Gastrocnemius medialis (tissue), 4 donors: ENCODE measurements at regions of chr9 and their contacts with region 1.

Region 1: GRCh38 chr9:37251452-37251851 is 131.1 kb downstream of the ZCCHC7 start:
- DNase-seq: no peak
- ATAC-seq: no peak
- H3K4me3 ChIP-seq: no peak overlapping the region
- H3K27ac ChIP-seq: no peak overlapping the region
- H3K4me1 ChIP-seq: no peaks in the 10 kb centered on the region
- H3K27me3 ChIP-seq: no peaks in the 10 kb centered on the region
- CTCF ChIP-seq: no peak
- POLR2A ChIP-seq: no peak

Region 2: GRCh38 chr9:37197158-37198038 is 54.1 kb before region 1 on chr9:
- in situ Hi-C with region 1: loop called in 1 of 4 experiments (anchors 10 kb)
- intact Hi-C with region 1: no loop called
- DNase-seq: no peak
- ATAC-seq: peak in 1 of 2 donors; percentile 44
- H3K4me3 ChIP-seq: no peak overlapping the region
- H3K27ac ChIP-seq: no peak overlapping the region
- H3K4me1 ChIP-seq: peaks cover 16 to 33% of the 10 kb centered on the region in 2 donors
- H3K27me3 ChIP-seq: no peaks in the 10 kb centered on the region
- CTCF ChIP-seq: no peak
- POLR2A ChIP-seq: no peak

Region 3: GRCh38 chr9:37350486-37351190 is 99.2 kb after region 1 on chr9:
- in situ Hi-C with region 1: no loop called
- intact Hi-C with region 1: no loop called
- DNase-seq: no peak
- ATAC-seq: no peak
- H3K4me3 ChIP-seq: no peak overlapping the region
- H3K27ac ChIP-seq: no peak overlapping the region
- H3K4me1 ChIP-seq: no peaks in the 10 kb centered on the region
- H3K27me3 ChIP-seq: no peaks in the 10 kb centered on the region
- CTCF ChIP-seq: no peak
- POLR2A ChIP-seq: no peak